Endothelial cell of umbilical vein (primary cell): ENCODE measurements at regions of chr19 and their contacts with region 1.

Region 1: GRCh38 chr19:13846557-13847406 is 30.2 kb upstream of the NANOS3 start:
- DNase-seq: peak; percentile 88
- H3K4me3 ChIP-seq: peak overlapping the region in 1 of 3 experiments; percentile 48
- H3K27ac ChIP-seq: peak overlapping the region; percentile 99
- H3K4me1 ChIP-seq: peaks cover 43% of the 10 kb centered on the region
- H3K27me3 ChIP-seq: no peaks in the 10 kb centered on the region
- CTCF ChIP-seq: no peak
- POLR2A ChIP-seq: no peak

Region 2: GRCh38 chr19:13827244-13828030 is 19.3 kb before region 1 on chr19:
- CTCF ChIA-PET with region 1: no interaction called
- POLR2A ChIA-PET with region 1: interaction called, 12 read pairs
- dilution Hi-C with region 1: no loop called
- intact Hi-C with region 1: no loop called
- DNase-seq: no peak
- H3K4me3 ChIP-seq: no peak overlapping the region
- H3K27ac ChIP-seq: no peak overlapping the region
- H3K4me1 ChIP-seq: no peaks in the 10 kb centered on the region
- H3K27me3 ChIP-seq: no peaks in the 10 kb centered on the region
- CTCF ChIP-seq: no peak
- POLR2A ChIP-seq: no peak

Region 3: DNA sequence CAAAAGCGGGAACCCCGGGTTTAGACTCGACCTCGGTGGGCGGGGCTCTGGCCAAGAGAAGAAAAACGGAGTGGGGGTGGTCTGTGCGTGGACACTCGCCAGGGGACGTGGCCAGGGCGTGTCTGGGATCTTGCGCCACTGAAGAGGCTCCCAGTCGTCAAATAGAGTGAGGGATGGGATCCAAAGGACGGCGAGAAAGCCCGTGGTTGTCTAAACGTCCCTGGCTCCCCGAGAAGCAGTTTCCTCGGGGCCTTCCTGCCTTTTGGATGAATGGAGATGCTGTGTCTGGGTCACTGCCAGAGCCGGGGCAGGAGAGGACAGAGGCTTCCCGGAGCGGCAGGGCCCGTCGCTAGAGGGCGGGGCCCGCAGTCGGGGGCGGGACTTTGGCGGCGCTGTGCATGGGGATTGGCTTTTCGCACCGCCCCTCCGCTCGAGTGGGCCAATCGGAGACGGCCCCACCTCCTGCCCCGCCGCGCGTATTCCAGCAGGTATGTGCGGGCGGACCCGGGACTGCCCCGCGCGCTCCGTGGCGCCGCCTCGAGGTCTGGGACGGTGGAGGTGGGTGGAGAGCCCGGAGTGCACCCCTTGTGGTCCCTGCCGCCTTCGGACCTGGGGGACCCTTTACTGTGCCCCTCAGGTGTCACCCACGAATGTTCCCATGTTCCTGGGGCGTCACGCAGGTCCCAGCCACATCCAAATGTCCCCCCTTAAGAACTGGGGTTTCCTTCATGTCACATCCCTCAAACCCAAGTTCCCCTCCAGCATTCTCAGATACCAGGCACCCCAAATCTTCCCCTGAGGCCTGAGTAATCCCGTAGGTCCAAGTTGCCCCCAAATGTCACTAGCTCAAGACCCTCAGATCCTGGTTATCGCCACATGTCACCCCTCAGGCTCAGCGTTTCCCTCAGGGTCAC is 13.2 kb before region 1 on chr19:
- CTCF ChIA-PET with region 1: no interaction called
- POLR2A ChIA-PET with region 1: interaction called, 12 read pairs
- dilution Hi-C with region 1: no loop called
- intact Hi-C with region 1: no loop called
- DNase-seq: peak; percentile 91
- H3K4me3 ChIP-seq: no peak overlapping the region
- H3K27ac ChIP-seq: peak overlapping the region; percentile 11
- H3K4me1 ChIP-seq: peaks cover 27% of the 10 kb centered on the region
- H3K27me3 ChIP-seq: no peaks in the 10 kb centered on the region
- CTCF ChIP-seq: peak; percentile 32 to 63
- POLR2A ChIP-seq: peak; percentile 93

Region 4: DNA sequence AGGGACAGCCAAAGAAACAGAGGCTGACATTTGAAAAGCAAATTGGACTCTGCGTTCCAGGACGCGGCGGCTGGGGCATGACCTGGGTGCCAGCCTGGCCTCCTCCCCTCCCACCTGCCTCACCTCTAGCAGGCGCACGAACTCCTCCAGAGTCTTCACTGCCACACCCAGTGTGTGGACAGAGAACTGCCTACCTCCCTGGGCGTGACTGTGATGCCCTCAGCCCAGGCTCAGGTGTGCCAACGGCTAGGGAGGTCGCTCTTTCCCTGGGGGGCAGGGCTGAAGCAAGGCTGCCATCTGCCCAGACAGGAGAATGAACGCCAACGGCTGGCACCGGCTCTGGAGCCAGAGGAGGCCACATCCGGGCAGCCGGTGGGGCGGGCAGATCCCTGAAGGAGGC is 41.5 kb after region 1 on chr19:
- CTCF ChIA-PET with region 1: no interaction called
- POLR2A ChIA-PET with region 1: no interaction called
- dilution Hi-C with region 1: no loop called
- intact Hi-C with region 1: no loop called
- DNase-seq: no peak
- H3K4me3 ChIP-seq: no peak overlapping the region
- H3K27ac ChIP-seq: no peak overlapping the region
- H3K4me1 ChIP-seq: peaks cover 5% of the 10 kb centered on the region
- H3K27me3 ChIP-seq: no peaks in the 10 kb centered on the region
- CTCF ChIP-seq: no peak
- POLR2A ChIP-seq: no peak